ENCODE measurements at regions of chr4 and their contacts with region 1.

Region 1: GRCh38 chr4:88514557-88515511 is 8.7 kb downstream of the PYURF start:
- DNase-seq: no peak
- H3K4me3 ChIP-seq: no peak overlapping the region
- H3K27ac ChIP-seq: no peak overlapping the region
- H3K4me1 ChIP-seq: peaks cover 0 to 2% (median 0%) of the 10 kb centered on the region in 4 experiments; a peak in 1 of 7 replicates
- H3K27me3 ChIP-seq: no peaks in the 10 kb centered on the region
- CTCF ChIP-seq: no peak
- EP300 ChIP-seq: no peak
- POLR2A ChIP-seq: no peak
- RAD21 ChIP-seq: no peak

Region 2: DNA sequence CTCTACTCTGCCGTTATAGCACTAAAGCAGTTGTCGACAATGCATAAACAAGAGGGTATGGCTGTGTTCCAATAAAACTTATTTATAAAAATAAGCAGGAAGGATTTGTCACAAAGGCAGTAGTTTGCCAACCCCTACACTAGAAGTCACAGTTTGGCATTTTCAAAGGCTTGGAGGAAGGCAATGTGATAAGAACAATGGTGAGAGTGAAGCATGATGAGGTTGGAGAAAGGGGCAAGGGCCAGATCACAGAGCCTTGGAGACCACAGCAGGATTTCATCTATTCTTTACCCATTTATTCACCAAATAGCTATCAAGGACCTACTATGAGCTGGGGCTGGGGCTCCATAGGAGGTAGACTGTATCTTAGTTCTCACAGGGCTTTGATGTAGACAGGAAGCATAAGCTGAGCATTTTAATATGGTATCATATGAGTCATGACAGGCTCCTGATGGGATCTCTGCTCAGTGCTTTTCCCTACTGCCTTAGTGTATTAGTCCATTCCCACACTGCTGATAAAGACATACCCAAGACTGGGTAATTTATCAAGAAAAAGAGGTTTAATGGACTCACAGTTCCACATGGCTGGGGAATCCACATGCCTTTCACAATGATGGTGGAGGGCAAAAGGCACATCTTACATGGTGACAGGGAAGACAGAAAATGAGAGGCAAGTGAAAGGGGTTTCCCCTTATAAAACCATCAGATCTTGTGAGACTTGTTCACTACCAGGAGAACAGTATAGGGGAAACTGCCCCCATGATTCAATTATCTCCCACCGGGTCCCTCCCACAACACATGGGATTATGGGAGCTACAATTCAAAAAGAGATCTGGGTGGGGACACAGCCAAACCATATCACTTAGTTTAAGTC is 289.4 kb before region 1 on chr4:
- CTCF ChIA-PET with region 1: interaction called, 112 read pairs
- POLR2A ChIA-PET with region 1: no interaction called
- DNase-seq: peak in 1 of 2 experiments; percentile 14
- H3K4me3 ChIP-seq: no peak overlapping the region
- H3K27ac ChIP-seq: no peak overlapping the region
- H3K4me1 ChIP-seq: no peaks in the 10 kb centered on the region
- H3K27me3 ChIP-seq: no peaks in the 10 kb centered on the region
- CTCF ChIP-seq: no peak
- EP300 ChIP-seq: no peak
- POLR2A ChIP-seq: no peak
- RAD21 ChIP-seq: no peak